Activated CD4-positive, alpha-beta T cell treated with anti-CD3 and anti-CD28 coated beads, Interleukin-2, amount 10 ng/mL, durations not matched to agents 24 days and 14 days (primary cell): ENCODE measurements at regions of chr4 and their contacts with region 1.

Region 1: DNA sequence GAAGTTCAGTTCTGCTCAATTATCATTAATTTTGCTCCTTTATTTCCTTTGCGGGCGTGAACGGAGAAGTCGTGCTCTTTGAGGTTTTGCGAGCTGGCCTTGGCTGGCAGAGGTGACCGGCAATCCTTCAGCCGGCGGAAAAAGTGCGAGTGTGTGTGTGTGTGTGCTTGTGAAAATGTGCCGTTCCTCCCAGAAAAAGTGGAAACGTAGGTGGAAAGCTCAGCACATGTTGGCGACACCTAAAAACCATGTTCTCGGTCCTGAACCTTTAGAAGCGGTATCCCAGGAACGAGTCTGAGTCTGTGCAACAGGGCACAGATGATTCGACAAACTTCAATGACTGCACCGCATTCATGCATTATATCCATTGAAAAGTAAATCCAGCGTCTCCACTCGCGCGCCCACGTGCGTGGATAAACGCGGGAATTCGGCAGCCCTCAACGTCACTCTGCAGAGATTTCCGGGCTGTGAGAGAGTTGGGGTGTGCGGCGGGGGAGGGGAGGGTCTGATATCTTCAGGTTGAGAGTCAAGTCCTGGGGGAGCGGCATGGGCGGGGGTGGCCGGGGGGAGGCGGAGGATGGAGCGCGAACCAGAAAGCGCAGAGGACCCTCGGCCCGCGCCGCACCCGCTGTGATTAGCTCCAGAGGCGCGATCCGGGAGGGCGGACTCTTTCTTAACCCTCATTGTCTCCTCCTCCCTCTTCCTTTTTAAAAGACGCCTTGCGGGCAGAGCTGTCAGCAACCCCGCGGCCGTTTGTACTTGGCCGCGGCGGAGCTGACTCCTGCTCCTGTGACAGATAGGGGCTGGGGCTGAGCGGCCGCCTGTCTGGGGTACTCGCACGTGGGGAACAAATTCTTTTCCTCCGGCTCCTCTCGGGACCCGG is at the start of gene SHISA3:
- DNase-seq: peak; percentile 78
- H3K4me3 Mint-ChIP-seq: peak within 1 kb of the TSS; percentile 85
- H3K27ac Mint-ChIP-seq: no peak within 1 kb of the TSS
- H3K4me1 Mint-ChIP-seq: peaks cover 25% of the 10 kb centered on the region
- H3K27me3 Mint-ChIP-seq: peaks cover 65% of the 10 kb centered on the region
- total RNA-seq, gene SHISA3: 0.09 and 0.23 TPM in 2 replicates

Region 2: DNA sequence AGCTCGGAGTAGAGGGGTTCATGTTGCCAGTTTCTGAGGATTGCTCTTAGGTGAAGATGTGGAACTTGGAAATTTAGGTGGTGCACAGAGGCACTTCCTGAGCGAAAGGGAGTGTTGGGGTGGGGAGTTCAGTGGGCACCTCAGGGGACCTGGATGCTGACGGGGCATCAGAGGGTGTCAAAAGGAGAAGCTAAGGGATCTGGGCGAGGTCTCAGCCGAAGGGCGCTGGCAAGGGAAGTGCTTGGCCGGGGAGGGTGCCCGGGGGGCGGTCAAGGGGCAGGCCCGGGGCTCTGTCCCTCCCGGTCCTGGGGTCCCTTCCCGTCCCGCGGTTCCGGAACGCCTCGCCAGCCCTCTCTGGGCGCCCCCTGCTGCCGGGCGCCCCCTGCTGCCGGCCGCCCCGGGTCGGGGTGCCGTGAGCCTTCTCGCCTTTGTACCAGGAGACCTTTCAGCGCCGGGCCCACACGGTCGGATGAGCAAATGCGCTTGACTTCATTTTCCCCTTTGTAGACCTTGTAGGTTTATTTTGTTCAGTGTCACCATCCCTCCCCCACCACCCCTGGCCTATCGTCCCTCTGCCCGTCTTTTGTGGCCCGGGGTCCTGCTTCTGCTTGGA is 645.4 kb before region 1 on chr4:
- intact Hi-C with region 1: loop called (anchors 10 kb)
- DNase-seq: no peak
- H3K4me3 Mint-ChIP-seq: no peak overlapping the region
- H3K27ac Mint-ChIP-seq: no peak overlapping the region
- H3K4me1 Mint-ChIP-seq: no peaks in the 10 kb centered on the region
- H3K27me3 Mint-ChIP-seq: peaks cover 75% of the 10 kb centered on the region

Region 3: GRCh38 chr4:42151568-42152506 is 245.2 kb before region 1 on chr4:
- intact Hi-C with region 1: loop called (anchors 2 kb)
- DNase-seq: peak; percentile 67
- H3K4me3 Mint-ChIP-seq: peak overlapping the region; percentile 72
- H3K27ac Mint-ChIP-seq: no peak overlapping the region
- H3K4me1 Mint-ChIP-seq: peaks cover 12% of the 10 kb centered on the region
- H3K27me3 Mint-ChIP-seq: peaks cover 49% of the 10 kb centered on the region